Activated CD4-positive, alpha-beta memory T cell treated with anti-CD3 and anti-CD28 coated beads for 36 hours (primary cell): ENCODE measurements at regions of chr11 and their contacts with region 1.

Region 1: GRCh38 chr11:33015621-33016551 is at the start of gene DEPDC7:
- DNase-seq: peak; percentile 83
- H3K4me3 Mint-ChIP-seq: peak within 1 kb of the TSS; percentile 75
- H3K27ac Mint-ChIP-seq: no peak within 1 kb of the TSS
- H3K4me1 Mint-ChIP-seq: peaks cover 33% of the 10 kb centered on the region
- H3K27me3 Mint-ChIP-seq: peaks cover 29% of the 10 kb centered on the region
- total RNA-seq, gene DEPDC7: 0.86 to 0.90 TPM

Region 2: GRCh38 chr11:32893343-32894148 is 122.3 kb before region 1 on chr11:
- CTCF ChIA-PET with region 1: interaction called, 4 read pairs
- POLR2A ChIA-PET with region 1: interaction called, 3 read pairs
- intact Hi-C with region 1: loop called (anchors 2 kb)
- DNase-seq: peak; percentile 68
- H3K4me3 Mint-ChIP-seq: peak overlapping the region; percentile 97
- H3K27ac Mint-ChIP-seq: peak overlapping the region; percentile 90
- H3K4me1 Mint-ChIP-seq: peaks cover 32% of the 10 kb centered on the region
- H3K27me3 Mint-ChIP-seq: no peaks in the 10 kb centered on the region

Region 3: DNA sequence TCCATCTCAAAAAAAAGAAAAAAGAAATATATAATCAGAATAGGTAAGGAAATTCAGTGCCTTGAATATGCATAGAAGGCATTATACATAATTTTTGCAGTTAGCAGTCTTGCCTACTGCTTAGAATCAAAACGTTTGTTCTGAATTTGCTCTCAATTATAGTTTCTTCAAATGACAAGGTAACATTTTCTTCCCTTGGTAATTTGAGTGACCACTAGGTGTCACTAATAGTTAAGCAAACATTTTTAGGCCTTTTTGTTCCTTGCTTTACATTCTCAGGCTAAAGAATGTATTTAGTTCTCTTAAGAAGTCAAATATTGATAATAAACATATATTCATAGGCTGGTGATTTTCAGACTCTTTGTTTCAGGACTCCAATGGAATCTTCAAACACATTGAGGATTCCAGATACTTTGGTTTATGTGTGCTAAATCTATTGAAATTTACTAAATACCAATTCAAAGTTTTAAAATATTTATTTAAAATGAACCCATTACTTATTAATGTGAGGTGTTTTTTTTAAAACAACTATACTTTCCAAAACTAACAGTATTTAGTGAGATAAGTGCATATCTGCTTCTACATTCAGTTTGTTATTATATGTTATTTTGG is 55.2 kb before region 1 on chr11:
- CTCF ChIA-PET with region 1: interaction called, 3 read pairs
- POLR2A ChIA-PET with region 1: no interaction called
- intact Hi-C with region 1: loop called (anchors 2 kb)
- DNase-seq: no peak
- H3K4me3 Mint-ChIP-seq: no peak overlapping the region
- H3K27ac Mint-ChIP-seq: no peak overlapping the region
- H3K4me1 Mint-ChIP-seq: peaks cover 9% of the 10 kb centered on the region
- H3K27me3 Mint-ChIP-seq: no peaks in the 10 kb centered on the region

Region 4: GRCh38 chr11:32972781-32973180 is 43.1 kb before region 1 on chr11:
- CTCF ChIA-PET with region 1: no interaction called
- POLR2A ChIA-PET with region 1: no interaction called
- intact Hi-C with region 1: no loop called
- DNase-seq: no peak
- H3K4me3 Mint-ChIP-seq: no peak overlapping the region
- H3K27ac Mint-ChIP-seq: no peak overlapping the region
- H3K4me1 Mint-ChIP-seq: no peaks in the 10 kb centered on the region
- H3K27me3 Mint-ChIP-seq: no peaks in the 10 kb centered on the region

Region 5: DNA sequence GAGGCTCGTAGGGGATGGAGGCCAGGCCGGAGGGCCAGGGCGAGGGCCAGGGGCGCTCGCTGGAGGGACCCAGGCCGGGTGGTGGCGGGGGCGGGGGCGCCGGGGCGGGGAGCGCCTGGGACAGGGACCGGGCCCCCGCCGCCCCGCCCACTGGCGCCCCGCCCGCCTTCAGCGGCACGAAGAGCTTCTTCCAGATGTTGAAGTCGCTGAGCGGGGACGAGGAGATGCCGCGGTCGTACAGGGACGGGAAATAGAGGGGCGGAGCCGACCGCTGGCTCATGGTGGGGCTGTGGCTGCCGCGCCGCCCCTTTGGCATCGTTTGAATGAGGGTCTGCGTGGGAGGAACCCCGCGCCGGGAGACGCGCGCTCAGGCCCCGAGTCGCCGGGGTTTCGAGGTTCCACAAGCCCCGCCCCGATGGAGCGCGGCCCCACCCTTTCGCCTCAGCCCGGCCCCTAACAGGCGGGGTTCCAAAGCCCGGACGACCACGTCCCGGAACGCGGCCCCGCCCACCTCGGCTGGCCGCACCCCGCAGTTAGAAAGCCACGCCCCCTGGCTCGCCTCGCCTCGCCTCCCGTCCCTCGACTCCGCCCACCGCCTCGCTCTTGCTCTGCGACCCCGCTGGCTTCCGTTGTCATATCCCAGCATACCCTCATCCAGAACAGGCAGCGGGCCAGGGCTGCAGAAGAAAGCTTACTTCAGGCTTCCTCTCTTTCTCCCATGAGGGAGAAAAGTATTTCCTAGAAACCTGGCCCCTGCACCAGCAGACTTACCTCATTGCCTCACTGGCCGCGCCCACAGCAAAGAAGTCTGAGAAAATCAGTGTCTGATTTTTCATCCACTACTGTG is 684.8 kb after region 1 on chr11 and contains the start of gene C11orf91:
- CTCF ChIA-PET with region 1: no interaction called
- POLR2A ChIA-PET with region 1: no interaction called
- intact Hi-C with region 1: loop called (anchors 2 kb)
- DNase-seq: peak; percentile 96
- H3K4me3 Mint-ChIP-seq: peak within 1 kb of the TSS; percentile 83
- H3K27ac Mint-ChIP-seq: peak within 1 kb of the TSS; percentile 39
- H3K4me1 Mint-ChIP-seq: peaks cover 11% of the 10 kb centered on the region
- H3K27me3 Mint-ChIP-seq: peaks cover 14% of the 10 kb centered on the region
- total RNA-seq, gene C11orf91: not detected

Region 6: GRCh38 chr11:33893711-33894397 is 878.0 kb after region 1 on chr11:
- CTCF ChIA-PET with region 1: no interaction called
- POLR2A ChIA-PET with region 1: no interaction called
- intact Hi-C with region 1: loop called (anchors 10 kb)
- DNase-seq: peak; percentile 88
- H3K4me3 Mint-ChIP-seq: peak overlapping the region; percentile 25
- H3K27ac Mint-ChIP-seq: no peak overlapping the region
- H3K4me1 Mint-ChIP-seq: peaks cover 31% of the 10 kb centered on the region
- H3K27me3 Mint-ChIP-seq: peaks cover 73% of the 10 kb centered on the region